ENCODE measurements at regions of chr1 and their contacts with region 1.

Region 1: DNA sequence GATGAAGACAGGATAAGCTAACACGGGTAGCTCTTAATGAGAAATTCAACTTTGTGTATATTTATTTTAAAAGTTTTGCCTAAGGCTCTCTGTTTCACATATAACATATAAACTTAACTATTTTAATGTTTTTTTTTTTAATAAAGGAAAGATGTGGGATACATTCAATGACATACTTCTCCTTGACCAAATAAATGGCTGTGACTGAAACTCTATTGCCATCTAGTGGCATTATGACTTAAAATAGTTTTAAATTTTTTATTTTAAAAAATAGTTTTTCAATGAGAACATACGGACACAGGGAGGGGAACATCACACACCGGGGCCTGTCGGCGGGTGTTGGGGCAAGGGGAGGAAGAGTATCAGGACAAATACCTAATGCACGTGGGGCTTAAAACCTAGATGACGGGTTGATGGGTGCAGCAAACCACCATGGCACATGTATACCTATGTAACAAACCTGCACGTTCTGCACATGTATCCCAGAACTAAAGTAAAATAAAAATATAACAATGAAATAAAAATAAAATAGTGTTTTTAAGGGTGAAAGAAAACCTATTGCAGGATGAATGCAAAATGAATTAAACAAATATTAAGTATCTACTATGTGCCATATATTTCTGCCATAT is 83.4 kb downstream of the LYST start:
- DNase-seq: no peak
- H3K4me3 ChIP-seq: no peak overlapping the region
- H3K27ac ChIP-seq: no peak overlapping the region
- H3K4me1 ChIP-seq: peaks cover 0 to 3% of the 10 kb centered on the region in 2 donors
- H3K27me3 ChIP-seq: no peaks in the 10 kb centered on the region
- CTCF ChIP-seq: peak in 2 of 3 experiments; percentile 35 to 59

Region 2: GRCh38 chr1:235513495-235514366 is 269.5 kb before region 1 on chr1:
- intact Hi-C with region 1: loop called (anchors 10 kb)
- DNase-seq: no peak
- H3K4me3 ChIP-seq: no peak overlapping the region
- H3K27ac ChIP-seq: no peak overlapping the region
- H3K4me1 ChIP-seq: no peaks in the 10 kb centered on the region
- H3K27me3 ChIP-seq: no peaks in the 10 kb centered on the region
- CTCF ChIP-seq: peak; percentile 64 to 95 (median 83)

Region 3: GRCh38 chr1:235683653-235684052 is 99.6 kb before region 1 on chr1:
- intact Hi-C with region 1: no loop called
- DNase-seq: no peak
- H3K4me3 ChIP-seq: no peak overlapping the region
- H3K27ac ChIP-seq: no peak overlapping the region
- H3K4me1 ChIP-seq: no peaks in the 10 kb centered on the region
- H3K27me3 ChIP-seq: no peaks in the 10 kb centered on the region
- CTCF ChIP-seq: no peak

Region 4: GRCh38 chr1:235971571-235972310 is 188.5 kb after region 1 on chr1:
- intact Hi-C with region 1: loop called (anchors 5 kb)
- DNase-seq: peak; percentile 83 to 97
- H3K4me3 ChIP-seq: peak overlapping the region; percentile 52 to 66
- H3K27ac ChIP-seq: peak overlapping the region; percentile 95 to 96
- H3K4me1 ChIP-seq: peaks cover 4 to 20% of the 10 kb centered on the region in 2 donors
- H3K27me3 ChIP-seq: no peaks in the 10 kb centered on the region
- CTCF ChIP-seq: peak; percentile 78 to 85 (median 84)